ENCODE measurements at regions of chr17 and their contacts with region 1.

Region 1: GRCh38 chr17:49836111-49837030 is 11.5 kb downstream of the TAC4 start:
- DNase-seq: peak; percentile 67 to 74
- H3K4me3 ChIP-seq: no peak overlapping the region
- H3K4me3 Mint-ChIP-seq: peak overlapping the region; percentile 69
- H3K27ac Mint-ChIP-seq: peak overlapping the region; percentile 78
- H3K4me1 ChIP-seq: peaks cover 29% of the 10 kb centered on the region
- H3K4me1 Mint-ChIP-seq: peaks cover 31% of the 10 kb centered on the region
- H3K27me3 ChIP-seq: no peaks in the 10 kb centered on the region
- H3K27me3 Mint-ChIP-seq: no peaks in the 10 kb centered on the region
- CTCF ChIP-seq: no peak

Region 2: GRCh38 chr17:49788478-49789242 is 47.7 kb before region 1 on chr17 and contains the start of gene KAT7:
- CTCF ChIA-PET with region 1: no interaction called
- POLR2A ChIA-PET with region 1: no interaction called
- intact Hi-C with region 1: no loop called
- DNase-seq: peak; percentile 100
- H3K4me3 ChIP-seq: peak within 1 kb of the TSS; percentile 78
- H3K4me3 Mint-ChIP-seq: peak within 1 kb of the TSS; percentile 90
- H3K27ac Mint-ChIP-seq: peak within 1 kb of the TSS; percentile 96
- H3K4me1 ChIP-seq: peaks cover 13% of the 10 kb centered on the region
- H3K4me1 Mint-ChIP-seq: peaks cover 21% of the 10 kb centered on the region
- H3K27me3 ChIP-seq: no peaks in the 10 kb centered on the region
- H3K27me3 Mint-ChIP-seq: peaks cover 4% of the 10 kb centered on the region
- CTCF ChIP-seq: peak in 1 of 2 experiments; percentile 31
- total RNA-seq, gene KAT7: 131 and 137 TPM in 2 replicates

Region 3: DNA sequence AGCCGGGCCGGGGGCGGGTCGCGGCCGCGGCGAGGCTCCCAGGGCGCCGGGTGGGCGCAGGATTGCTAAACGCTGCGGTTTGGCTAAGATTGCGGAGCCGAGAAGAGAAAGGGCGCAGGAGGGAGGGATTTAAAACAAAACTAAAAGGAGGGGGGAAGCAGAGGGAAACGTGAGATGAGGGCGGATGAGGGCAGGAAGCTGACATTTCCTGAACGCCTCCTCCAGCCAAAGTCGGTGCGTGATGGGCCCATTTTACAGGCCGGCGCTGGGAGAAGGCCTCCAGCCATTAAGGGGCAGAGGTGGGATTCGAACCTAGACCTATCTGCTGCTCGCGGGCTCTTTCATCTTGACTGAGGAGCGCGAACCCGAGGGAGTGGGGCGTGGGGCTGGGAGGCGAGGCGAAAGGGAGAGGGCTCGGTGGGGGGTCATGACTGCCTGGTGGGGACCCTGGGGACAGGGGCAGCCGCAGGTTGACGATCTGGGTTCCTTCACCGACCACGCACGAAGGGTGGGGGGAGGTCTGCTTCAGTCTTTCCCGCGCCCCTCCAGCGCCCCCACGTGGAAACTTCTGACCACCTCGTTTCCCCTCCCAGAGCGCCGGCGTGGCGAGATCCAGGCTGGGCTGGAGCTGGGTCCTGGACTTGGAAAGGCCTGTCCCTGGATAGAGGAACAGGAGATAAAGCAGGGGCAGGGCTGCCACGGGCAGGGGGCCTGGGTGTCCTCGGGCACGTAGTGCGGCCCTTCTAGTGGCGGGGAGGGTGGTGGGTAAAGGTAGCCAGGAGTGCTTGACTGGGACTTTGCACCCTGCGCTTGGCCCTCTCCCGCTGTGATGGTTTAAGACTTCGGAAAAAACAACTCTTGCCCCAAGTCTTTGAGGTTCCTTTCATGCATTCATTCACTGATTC is 15.3 kb after region 1 on chr17:
- CTCF ChIA-PET with region 1: no interaction called
- POLR2A ChIA-PET with region 1: interaction called, 3 read pairs
- intact Hi-C with region 1: loop called (anchors 2 kb)
- DNase-seq: peak; percentile 83 to 92
- H3K4me3 ChIP-seq: peak overlapping the region; percentile 35
- H3K4me3 Mint-ChIP-seq: peak overlapping the region; percentile 65
- H3K27ac Mint-ChIP-seq: peak overlapping the region; percentile 13
- H3K4me1 ChIP-seq: peaks cover 27% of the 10 kb centered on the region
- H3K4me1 Mint-ChIP-seq: peaks cover 22% of the 10 kb centered on the region
- H3K27me3 ChIP-seq: no peaks in the 10 kb centered on the region
- H3K27me3 Mint-ChIP-seq: peaks cover 10% of the 10 kb centered on the region
- CTCF ChIP-seq: peak; percentile 84 to 91

Region 4: DNA sequence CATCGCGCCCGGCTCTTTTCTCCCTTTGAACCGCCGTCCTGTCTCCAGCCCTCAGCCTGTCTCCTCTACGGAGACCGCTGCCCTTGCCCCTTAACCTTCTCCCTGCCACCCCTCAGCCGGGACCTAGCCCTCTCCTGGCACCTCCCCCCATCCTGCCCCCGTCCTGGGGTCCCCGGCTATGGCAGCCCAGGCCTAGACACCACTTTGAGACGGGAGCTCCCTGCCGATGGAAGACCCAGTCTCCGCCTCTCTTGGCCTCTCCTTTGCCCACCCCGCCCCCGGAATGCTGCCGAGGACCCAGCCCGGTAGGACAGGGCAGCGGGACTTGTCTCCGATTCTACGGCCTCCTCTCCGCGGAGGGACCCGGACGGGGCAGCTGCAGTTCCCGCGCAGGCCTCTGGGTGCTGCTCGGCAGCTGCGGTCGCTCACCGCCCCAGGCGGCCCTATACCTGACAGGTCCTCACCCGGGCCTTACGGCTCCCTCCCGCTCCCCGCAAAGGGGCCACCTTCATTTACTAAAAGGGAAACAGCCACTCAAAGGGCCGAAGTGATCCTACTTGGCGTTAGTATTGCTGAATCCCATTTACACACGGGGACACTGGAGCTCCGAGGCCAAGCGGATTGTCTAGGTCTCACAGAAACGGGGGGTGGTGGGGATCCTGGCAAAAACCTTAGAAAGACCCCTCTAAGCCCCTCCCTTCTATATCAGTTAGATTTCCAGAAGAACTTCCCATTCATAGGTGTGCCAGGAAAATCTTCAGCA is 44.1 kb after region 1 on chr17:
- CTCF ChIA-PET with region 1: no interaction called
- POLR2A ChIA-PET with region 1: no interaction called
- intact Hi-C with region 1: no loop called
- DNase-seq: peak; percentile 98 to 100
- H3K4me3 ChIP-seq: peak overlapping the region; percentile 4; the same call in 1 of the 2 replicates
- H3K4me3 Mint-ChIP-seq: peak overlapping the region; percentile 63
- H3K27ac Mint-ChIP-seq: peak overlapping the region; percentile 83
- H3K4me1 ChIP-seq: peaks cover 57% of the 10 kb centered on the region
- H3K4me1 Mint-ChIP-seq: peaks cover 39% of the 10 kb centered on the region
- H3K27me3 ChIP-seq: no peaks in the 10 kb centered on the region
- H3K27me3 Mint-ChIP-seq: no peaks in the 10 kb centered on the region
- CTCF ChIP-seq: peak; percentile 100